ENCODE measurements at regions of chrX and their contacts with region 1.

Region 1: DNA sequence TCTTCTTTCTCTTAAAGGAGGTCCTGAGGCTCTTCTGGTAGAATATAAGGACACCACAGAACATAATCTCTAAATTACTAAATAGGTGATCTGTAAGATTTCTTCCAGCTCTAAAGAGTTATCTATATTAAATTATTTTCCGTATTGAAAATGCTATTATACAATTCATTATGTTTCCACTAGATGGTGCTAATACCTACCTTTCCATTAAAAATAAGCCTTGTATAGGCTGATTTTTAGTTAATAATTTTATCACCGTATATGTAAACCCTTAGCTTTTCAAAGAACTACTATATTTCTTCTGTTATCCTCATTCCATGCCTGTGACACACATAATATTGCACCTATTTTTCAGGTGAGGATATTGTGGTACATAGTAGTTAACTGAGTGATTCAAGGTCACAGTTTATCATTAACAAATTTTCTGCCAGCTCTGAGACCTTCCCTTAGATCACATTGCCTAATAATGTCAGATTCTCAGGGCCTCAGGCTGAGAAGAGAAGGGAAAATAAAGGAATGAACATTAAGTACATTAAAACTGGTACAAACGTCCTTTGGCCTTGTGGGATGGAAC is 138.8 kb downstream of the TEX11 start:
- DNase-seq: peak in 1 of 4 experiments; percentile 9
- ATAC-seq: no peak
- H3K4me3 ChIP-seq: no peak overlapping the region
- H3K27ac ChIP-seq: no peak overlapping the region
- H3K4me1 ChIP-seq: no peaks in the 10 kb centered on the region; a peak in 1 of 5 replicates
- H3K27me3 ChIP-seq: no peaks in the 10 kb centered on the region
- CTCF ChIP-seq: peak in 2 of 3 experiments; percentile 8 to 53; a peak in 2 of 6 replicates
- EP300 ChIP-seq: no peak
- POLR2A ChIP-seq: no peak
- RAD21 ChIP-seq: peak; percentile 50 to 59

Region 2: GRCh38 chrX:70954877-70955276 is 185.1 kb after region 1 on chrX:
- CTCF ChIA-PET with region 1: no interaction called
- POLR2A ChIA-PET with region 1: no interaction called
- in situ Hi-C with region 1: loop called (anchors 10 kb)
- intact Hi-C with region 1: loop called (anchors 1 kb)
- DNase-seq: no peak
- ATAC-seq: no peak
- H3K4me3 ChIP-seq: no peak overlapping the region
- H3K27ac ChIP-seq: no peak overlapping the region
- H3K4me1 ChIP-seq: no peaks in the 10 kb centered on the region
- H3K27me3 ChIP-seq: no peaks in the 10 kb centered on the region
- CTCF ChIP-seq: no peak
- EP300 ChIP-seq: no peak
- POLR2A ChIP-seq: no peak
- RAD21 ChIP-seq: no peak

Region 3: DNA sequence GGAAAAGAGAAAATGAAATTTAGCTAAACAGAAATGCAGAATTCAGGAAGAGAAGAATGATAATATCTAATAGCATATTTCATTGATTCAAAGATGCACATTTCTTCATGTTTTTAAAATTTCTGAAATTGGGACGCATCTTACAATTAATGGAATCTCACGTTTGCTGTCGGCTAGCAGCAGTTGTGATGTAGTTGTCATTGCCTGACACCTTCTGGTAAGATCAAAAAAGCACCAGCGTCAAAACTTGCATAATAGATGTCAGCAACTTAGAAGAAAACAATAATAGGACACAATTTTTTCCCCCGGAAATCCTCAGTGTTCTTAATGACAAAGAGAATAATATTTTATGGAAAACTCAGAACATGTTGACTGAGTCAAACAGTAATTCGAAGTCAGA is 191.0 kb after region 1 on chrX:
- CTCF ChIA-PET with region 1: no interaction called
- POLR2A ChIA-PET with region 1: no interaction called
- in situ Hi-C with region 1: loop called (anchors 10 kb)
- intact Hi-C with region 1: loop called (anchors 1 kb)
- DNase-seq: peak in 1 of 4 experiments; percentile 14
- ATAC-seq: 0 out of 3 replicates have a peak, but pooled peaks have one; percentile 47
- H3K4me3 ChIP-seq: no peak overlapping the region
- H3K27ac ChIP-seq: no peak overlapping the region
- H3K4me1 ChIP-seq: no peaks in the 10 kb centered on the region
- H3K27me3 ChIP-seq: no peaks in the 10 kb centered on the region
- CTCF ChIP-seq: peak in 2 of 3 experiments; percentile 38 to 62; a peak in 4 of 6 replicates
- EP300 ChIP-seq: no peak
- POLR2A ChIP-seq: no peak
- RAD21 ChIP-seq: peak in 1 of 2 experiments; percentile 61; a peak in 2 of 4 replicates

Region 4: DNA sequence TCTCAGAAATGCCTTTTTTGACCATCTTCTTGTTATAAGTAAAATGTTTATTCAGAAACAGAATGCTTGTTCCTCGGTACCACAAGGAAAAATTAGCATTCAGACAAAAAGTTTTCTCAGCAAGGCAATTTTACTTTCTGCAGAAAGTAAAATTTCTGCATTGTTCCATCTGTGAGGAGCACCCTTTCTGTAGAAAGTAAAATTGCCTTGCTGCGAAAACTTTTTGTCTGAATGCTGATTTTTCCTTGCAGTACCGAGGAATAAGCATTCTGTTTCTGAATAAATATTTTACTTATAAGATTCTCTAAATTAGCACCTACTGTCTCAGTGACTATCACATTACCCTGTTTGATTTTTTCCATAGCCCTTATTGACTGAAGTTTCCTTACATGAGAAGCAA is 556.6 kb after region 1 on chrX:
- CTCF ChIA-PET with region 1: no interaction called
- POLR2A ChIA-PET with region 1: no interaction called
- in situ Hi-C with region 1: loop called (anchors 25 kb)
- intact Hi-C with region 1: no loop called
- DNase-seq: no peak
- ATAC-seq: no peak
- H3K4me3 ChIP-seq: no peak overlapping the region
- H3K27ac ChIP-seq: no peak overlapping the region
- H3K4me1 ChIP-seq: no peaks in the 10 kb centered on the region
- H3K27me3 ChIP-seq: no peaks in the 10 kb centered on the region
- CTCF ChIP-seq: no peak
- EP300 ChIP-seq: no peak
- POLR2A ChIP-seq: no peak
- RAD21 ChIP-seq: no peak